ENCODE measurements at regions of chr1 and their contacts with region 1.

Region 1: GRCh38 chr1:47894713-47895537 is 102.3 kb downstream of the TRABD2B start:
- DNase-seq: peak; percentile 96
- ATAC-seq: peak; percentile 90
- H3K4me3 ChIP-seq: no peak overlapping the region
- H3K27ac ChIP-seq: peak overlapping the region; percentile 92
- H3K4me1 ChIP-seq: peaks cover 37% of the 10 kb centered on the region
- H3K27me3 ChIP-seq: no peaks in the 10 kb centered on the region
- CTCF ChIP-seq: no peak

Region 2: DNA sequence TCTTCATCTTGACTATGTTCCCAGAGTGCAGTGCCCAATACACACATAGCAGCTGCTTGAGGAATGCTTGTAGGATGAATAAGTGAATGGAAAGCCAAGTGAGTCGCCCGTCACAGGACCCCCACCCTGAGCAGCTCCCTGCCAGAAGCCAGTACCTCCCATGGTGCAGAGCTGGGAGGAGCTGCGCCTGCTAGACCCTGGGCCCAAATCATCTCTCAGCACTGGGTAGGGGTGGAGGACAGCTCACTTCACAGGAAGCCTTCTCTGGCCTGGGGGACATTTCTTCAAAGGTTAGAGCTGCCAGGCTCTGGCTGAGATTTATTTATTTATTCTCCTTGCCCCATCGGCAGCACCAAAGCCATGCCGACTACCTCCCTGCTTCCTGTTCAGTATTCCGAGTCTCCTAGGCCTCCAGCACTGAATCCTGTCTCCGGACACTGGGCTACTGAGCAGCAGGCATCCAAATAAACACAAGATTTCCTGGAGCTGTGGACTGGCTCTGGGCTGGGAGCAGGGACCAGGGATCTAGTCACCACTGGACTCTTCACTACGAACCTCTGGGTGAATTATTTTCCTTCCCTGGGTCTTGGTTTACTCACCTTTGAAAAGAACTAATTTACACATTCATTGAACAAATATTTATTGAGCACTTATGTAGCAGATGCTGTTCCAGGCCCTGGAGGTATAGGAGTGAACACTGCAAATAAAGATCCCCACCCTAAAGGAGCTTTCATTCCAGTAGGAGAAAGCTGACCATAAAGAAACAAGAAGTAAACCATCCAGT is 85.4 kb before region 1 on chr1:
- CTCF ChIA-PET with region 1: no interaction called
- POLR2A ChIA-PET with region 1: no interaction called
- intact Hi-C with region 1: loop called (anchors 2 kb)
- DNase-seq: peak; percentile 57
- ATAC-seq: peak; percentile 79
- H3K4me3 ChIP-seq: no peak overlapping the region
- H3K27ac ChIP-seq: peak overlapping the region; percentile 49
- H3K4me1 ChIP-seq: peaks cover 23% of the 10 kb centered on the region
- H3K27me3 ChIP-seq: no peaks in the 10 kb centered on the region
- CTCF ChIP-seq: no peak

Region 3: DNA sequence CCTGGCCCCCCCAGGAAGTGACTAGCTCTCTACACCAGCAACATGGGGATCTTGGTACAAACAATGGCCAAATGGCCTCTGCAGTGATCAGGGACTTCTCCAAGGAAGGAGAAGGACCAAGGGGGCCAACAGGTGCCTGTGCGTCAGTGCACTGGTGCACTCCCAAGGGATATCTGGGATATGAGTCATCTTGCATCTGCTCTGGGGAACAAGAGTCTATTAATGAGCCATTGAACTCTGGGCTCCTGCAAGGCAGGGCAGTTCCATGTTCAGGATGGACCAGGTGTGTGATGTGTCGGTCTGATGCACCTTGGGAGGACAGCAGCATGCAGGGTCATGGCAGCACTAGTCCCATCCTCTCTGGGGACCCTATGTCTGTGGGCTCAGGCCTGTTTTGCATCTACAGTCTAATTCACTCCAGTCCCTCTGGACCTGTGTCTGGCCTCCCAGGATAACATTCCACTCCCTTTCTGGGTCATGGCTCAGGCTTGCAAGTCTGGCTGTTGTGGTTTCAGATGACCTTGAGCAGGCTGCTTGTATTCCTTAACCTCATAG is 23.0 kb before region 1 on chr1:
- CTCF ChIA-PET with region 1: no interaction called
- POLR2A ChIA-PET with region 1: no interaction called
- intact Hi-C with region 1: loop called (anchors 1 kb)
- DNase-seq: peak; percentile 89
- ATAC-seq: peak; percentile 70
- H3K4me3 ChIP-seq: no peak overlapping the region
- H3K27ac ChIP-seq: peak overlapping the region; percentile 94
- H3K4me1 ChIP-seq: peaks cover 57% of the 10 kb centered on the region
- H3K27me3 ChIP-seq: no peaks in the 10 kb centered on the region
- CTCF ChIP-seq: no peak